ENCODE measurements at regions of chr4 and their contacts with region 1.

Region 1: GRCh38 chr4:69689599-69689998 is 36.6 kb upstream of the UGT2A1 start:
- DNase-seq: peak in 6 of 9 donors; percentile 20 to 63 (median 48)
- ATAC-seq: peak; percentile 76
- H3K4me3 ChIP-seq: no peak overlapping the region
- H3K4me3 Mint-ChIP-seq: peak overlapping the region in 7 of 10 donors; percentile 39 to 76 (median 55)
- H3K27ac ChIP-seq: no peak overlapping the region
- H3K27ac Mint-ChIP-seq: peak overlapping the region in 3 of 9 donors; percentile 30 to 53 (median 38)
- H3K4me1 ChIP-seq: no peaks in the 10 kb centered on the region
- H3K4me1 Mint-ChIP-seq: peaks cover 0 to 19% (median 5%) of the 10 kb centered on the region in 7 donors
- H3K27me3 ChIP-seq: no peaks in the 10 kb centered on the region
- H3K27me3 Mint-ChIP-seq: no peaks in the 10 kb centered on the region

Region 2: DNA sequence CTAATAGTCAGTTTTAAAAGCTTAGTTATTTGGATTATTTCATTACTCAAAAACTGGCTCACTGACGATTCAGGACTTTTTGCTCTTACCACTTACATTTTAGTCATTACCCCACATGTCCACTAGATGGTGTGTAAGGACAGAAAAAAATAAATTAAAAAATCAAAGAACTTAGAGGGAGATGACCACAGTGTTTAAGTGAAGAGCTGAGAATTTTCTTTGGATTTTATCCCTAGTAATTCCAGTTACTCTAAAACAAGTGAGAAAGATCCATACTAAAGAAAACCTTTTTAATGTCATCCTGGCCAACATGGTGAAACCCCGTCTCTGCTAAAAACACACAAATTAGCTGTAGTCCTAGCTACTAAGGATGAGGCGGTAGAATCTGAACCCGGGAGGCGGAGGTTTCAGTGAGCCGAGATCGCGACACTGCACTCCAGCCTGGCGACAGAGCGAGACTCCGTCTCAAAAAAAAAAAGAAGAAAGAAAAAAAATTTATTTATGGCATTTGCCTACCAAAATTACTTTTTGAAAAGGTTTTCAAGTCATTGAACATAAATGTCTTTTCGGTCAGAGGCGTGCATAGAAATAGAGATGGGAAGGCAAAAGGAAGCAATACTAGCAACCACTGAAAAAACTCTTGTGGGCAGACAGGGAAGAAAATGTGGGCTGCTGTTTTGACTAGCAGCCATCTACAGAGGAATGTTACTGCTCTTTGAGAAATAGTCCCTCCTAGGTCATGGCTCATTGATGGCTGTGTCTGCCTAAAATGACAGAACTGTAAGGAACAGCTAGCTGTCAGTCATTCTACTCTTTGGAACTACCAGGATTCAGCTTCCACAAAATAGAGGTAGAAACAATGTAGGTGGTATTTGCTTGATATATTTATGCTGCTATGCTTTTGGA is 1417.5 kb before region 1 on chr4:
- CTCF ChIA-PET with region 1: no interaction called
- POLR2A ChIA-PET with region 1: no interaction called
- intact Hi-C with region 1: loop called in 1 of 2 experiments (anchors 5 kb)
- DNase-seq: peak in 6 of 9 donors; percentile 11 to 53 (median 40)
- ATAC-seq: peak; percentile 75
- H3K4me3 ChIP-seq: no peak overlapping the region
- H3K4me3 Mint-ChIP-seq: peak overlapping the region in 9 of 10 donors; percentile 18 to 57 (median 43)
- H3K27ac ChIP-seq: no peak overlapping the region
- H3K27ac Mint-ChIP-seq: no peak overlapping the region
- H3K4me1 ChIP-seq: no peaks in the 10 kb centered on the region
- H3K4me1 Mint-ChIP-seq: peaks cover 0 to 12% (median 0%) of the 10 kb centered on the region in 7 donors
- H3K27me3 ChIP-seq: no peaks in the 10 kb centered on the region
- H3K27me3 Mint-ChIP-seq: peaks cover 0 to 16% (median 12%) of the 10 kb centered on the region in 5 donors

Region 3: GRCh38 chr4:69823481-69824186 is 134.0 kb after region 1 on chr4:
- CTCF ChIA-PET with region 1: interaction called, 47 read pairs
- POLR2A ChIA-PET with region 1: no interaction called
- intact Hi-C with region 1: loop called (anchors 1 kb)
- DNase-seq: peak in 7 of 9 donors; percentile 34 to 71 (median 65)
- ATAC-seq: peak; percentile 96
- H3K4me3 ChIP-seq: no peak overlapping the region
- H3K4me3 Mint-ChIP-seq: peak overlapping the region in 2 of 10 donors; percentile 47 to 50
- H3K27ac ChIP-seq: no peak overlapping the region
- H3K27ac Mint-ChIP-seq: peak overlapping the region in 5 of 9 donors; percentile 6 to 75 (median 23)
- H3K4me1 ChIP-seq: peaks cover 0 to 4% of the 10 kb centered on the region in 2 donors
- H3K4me1 Mint-ChIP-seq: peaks cover 4 to 21% (median 10%) of the 10 kb centered on the region in 7 donors
- H3K27me3 ChIP-seq: no peaks in the 10 kb centered on the region
- H3K27me3 Mint-ChIP-seq: no peaks in the 10 kb centered on the region

Region 4: GRCh38 chr4:70183168-70183939 is 493.8 kb after region 1 on chr4:
- CTCF ChIA-PET with region 1: interaction called, 4 read pairs
- POLR2A ChIA-PET with region 1: no interaction called
- intact Hi-C with region 1: loop called in 1 of 2 experiments (anchors 1 kb)
- DNase-seq: peak in 2 of 9 donors; percentile 1 to 5
- ATAC-seq: no peak
- H3K4me3 ChIP-seq: no peak overlapping the region
- H3K4me3 Mint-ChIP-seq: no peak overlapping the region
- H3K27ac ChIP-seq: no peak overlapping the region
- H3K27ac Mint-ChIP-seq: no peak overlapping the region
- H3K4me1 ChIP-seq: no peaks in the 10 kb centered on the region
- H3K4me1 Mint-ChIP-seq: no peaks in the 10 kb centered on the region
- H3K27me3 ChIP-seq: no peaks in the 10 kb centered on the region
- H3K27me3 Mint-ChIP-seq: peaks cover 0 to 5% (median 2%) of the 10 kb centered on the region in 5 donors

Region 5: GRCh38 chr4:70559211-70559830 is 869.7 kb after region 1 on chr4:
- CTCF ChIA-PET with region 1: interaction called, 3 read pairs
- POLR2A ChIA-PET with region 1: no interaction called
- intact Hi-C with region 1: loop called in 1 of 2 experiments (anchors 1 kb)
- DNase-seq: peak in 5 of 9 donors; percentile 19 to 33 (median 31)
- ATAC-seq: peak; percentile 58
- H3K4me3 ChIP-seq: no peak overlapping the region
- H3K4me3 Mint-ChIP-seq: peak overlapping the region in 4 of 10 donors; percentile 16 to 52 (median 36)
- H3K27ac ChIP-seq: no peak overlapping the region
- H3K27ac Mint-ChIP-seq: no peak overlapping the region
- H3K4me1 ChIP-seq: no peaks in the 10 kb centered on the region
- H3K4me1 Mint-ChIP-seq: peaks cover 0 to 15% (median 6%) of the 10 kb centered on the region in 7 donors
- H3K27me3 ChIP-seq: no peaks in the 10 kb centered on the region
- H3K27me3 Mint-ChIP-seq: no peaks in the 10 kb centered on the region